HCT116 (cell line): ENCODE measurements at regions of chrX and their contacts with region 1.

Region 1: DNA sequence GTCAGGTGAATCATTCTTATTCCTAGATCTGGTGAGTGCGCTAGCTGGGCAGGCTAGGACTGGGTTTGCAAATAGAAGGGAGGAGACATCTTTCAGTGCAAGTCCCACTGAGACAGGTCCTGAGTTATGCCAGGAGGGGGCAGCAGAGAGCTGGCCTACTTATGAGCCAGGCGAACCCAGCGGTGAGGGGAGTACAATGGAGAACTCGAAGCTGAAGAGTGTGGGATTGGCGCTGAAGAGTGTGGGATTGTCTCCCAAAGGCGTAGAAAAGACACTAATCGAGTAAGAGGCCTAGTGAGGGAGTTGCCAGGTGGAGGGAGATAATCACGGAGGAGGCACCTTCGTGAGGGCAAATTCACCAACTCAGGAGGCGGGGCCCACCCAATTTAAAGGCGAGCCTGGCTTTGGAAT is 91.7 kb upstream of the CXorf66 start:
- DNase-seq: peak; percentile 24
- ATAC-seq: peak; percentile 94
- H3K4me3 ChIP-seq: no peak overlapping the region
- H3K27ac ChIP-seq: no peak overlapping the region
- H3K4me1 ChIP-seq: no peaks in the 10 kb centered on the region
- H3K27me3 ChIP-seq: no peaks in the 10 kb centered on the region
- CTCF ChIP-seq: peak; percentile 15 to 72 (median 66); a peak in 4 of 6 replicates
- POLR2A ChIP-seq: no peak
- RAD21 ChIP-seq: peak; percentile 45

Region 2: GRCh38 chrX:140141444-140142029 is 84.5 kb after region 1 on chrX:
- CTCF ChIA-PET with region 1: interaction called, 4 read pairs
- POLR2A ChIA-PET with region 1: no interaction called
- RAD21 ChIA-PET with region 1: no interaction called
- intact Hi-C with region 1: loop called (anchors 5 kb)
- DNase-seq: peak; percentile 2
- ATAC-seq: peak; percentile 59
- H3K4me3 ChIP-seq: no peak overlapping the region
- H3K27ac ChIP-seq: no peak overlapping the region
- H3K4me1 ChIP-seq: no peaks in the 10 kb centered on the region
- H3K27me3 ChIP-seq: no peaks in the 10 kb centered on the region
- CTCF ChIP-seq: peak; percentile 8 to 46 (median 42); a peak in 3 of 6 replicates
- POLR2A ChIP-seq: no peak
- RAD21 ChIP-seq: peak; percentile 22; the same call in 1 of the 2 replicates

Region 3: DNA sequence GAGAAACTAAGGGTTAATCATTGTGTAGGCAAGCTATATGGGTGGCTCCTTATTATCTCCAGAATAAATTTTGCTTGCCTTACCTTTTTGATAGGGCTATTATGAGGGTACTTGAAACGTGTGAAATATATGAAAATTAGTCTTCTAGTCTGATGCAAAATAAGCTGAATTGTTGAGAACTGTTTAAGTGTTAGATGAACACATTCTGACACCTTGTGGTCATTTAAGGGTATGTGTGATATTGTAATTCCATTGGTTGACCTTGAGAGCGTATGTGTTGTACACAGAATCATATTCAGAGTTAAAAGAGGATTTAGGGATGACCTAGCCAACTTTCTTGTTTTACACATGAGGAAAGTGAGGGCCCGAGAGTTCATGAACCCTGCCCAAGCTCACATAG is 607.9 kb after region 1 on chrX:
- CTCF ChIA-PET with region 1: interaction called, 3 read pairs
- POLR2A ChIA-PET with region 1: no interaction called
- RAD21 ChIA-PET with region 1: no interaction called
- intact Hi-C with region 1: loop called (anchors 5 kb)
- DNase-seq: no peak
- ATAC-seq: no peak
- H3K4me3 ChIP-seq: no peak overlapping the region
- H3K27ac ChIP-seq: no peak overlapping the region
- H3K4me1 ChIP-seq: no peaks in the 10 kb centered on the region
- H3K27me3 ChIP-seq: no peaks in the 10 kb centered on the region
- CTCF ChIP-seq: no peak
- POLR2A ChIP-seq: no peak
- RAD21 ChIP-seq: peak; percentile 17; the same call in 1 of the 2 replicates